Dendritic cell treated with granulocyte-macrophage colony-stimulating factor and Interleukin-4, amounts not matched to agents 40 ng/mL and 50 ng/mL, for 4 days (primary cell): ENCODE measurements at regions of chr18 and their contacts with region 1.

Region 1: DNA sequence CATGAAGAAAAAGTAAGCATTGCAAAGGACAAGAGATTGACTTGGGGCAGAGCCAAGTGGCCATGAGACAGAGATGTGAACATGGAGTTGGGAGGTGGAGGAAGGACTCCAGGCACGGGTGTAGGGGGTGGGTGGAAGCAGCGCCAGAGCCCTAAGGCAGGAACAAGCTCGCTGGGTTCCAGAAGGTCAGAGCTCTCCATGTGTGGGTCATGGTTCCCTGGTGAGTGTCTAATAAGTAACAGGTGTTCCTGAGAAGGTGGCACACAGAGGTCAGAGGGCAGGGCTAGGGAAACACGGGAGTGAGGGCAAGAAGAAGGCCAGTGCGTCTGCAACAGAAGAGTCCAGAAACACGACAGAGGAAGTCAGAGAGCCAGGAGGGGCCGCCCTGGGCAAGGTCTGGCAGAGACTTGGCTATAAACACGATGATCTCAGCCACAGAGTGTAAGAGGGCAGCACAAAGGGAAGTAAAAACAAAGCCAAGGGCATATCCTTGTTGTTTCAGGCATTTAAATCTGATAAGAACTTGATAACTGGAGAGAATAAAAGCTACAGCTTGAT is 260.8 kb downstream of the TGIF1 start:
- H3K4me3 Mint-ChIP-seq: peak overlapping the region; percentile 22
- H3K27ac Mint-ChIP-seq: peak overlapping the region; percentile 81
- H3K4me1 Mint-ChIP-seq: peaks cover 60% of the 10 kb centered on the region
- H3K27me3 Mint-ChIP-seq: no peaks in the 10 kb centered on the region

Region 2: GRCh38 chr18:3726238-3726951 is 15.6 kb after region 1 on chr18:
- intact Hi-C with region 1: loop called (anchors 2 kb)
- H3K4me3 Mint-ChIP-seq: no peak overlapping the region
- H3K27ac Mint-ChIP-seq: peak overlapping the region; percentile 79
- H3K4me1 Mint-ChIP-seq: peaks cover 58% of the 10 kb centered on the region
- H3K27me3 Mint-ChIP-seq: peaks cover 1% of the 10 kb centered on the region

Region 3: DNA sequence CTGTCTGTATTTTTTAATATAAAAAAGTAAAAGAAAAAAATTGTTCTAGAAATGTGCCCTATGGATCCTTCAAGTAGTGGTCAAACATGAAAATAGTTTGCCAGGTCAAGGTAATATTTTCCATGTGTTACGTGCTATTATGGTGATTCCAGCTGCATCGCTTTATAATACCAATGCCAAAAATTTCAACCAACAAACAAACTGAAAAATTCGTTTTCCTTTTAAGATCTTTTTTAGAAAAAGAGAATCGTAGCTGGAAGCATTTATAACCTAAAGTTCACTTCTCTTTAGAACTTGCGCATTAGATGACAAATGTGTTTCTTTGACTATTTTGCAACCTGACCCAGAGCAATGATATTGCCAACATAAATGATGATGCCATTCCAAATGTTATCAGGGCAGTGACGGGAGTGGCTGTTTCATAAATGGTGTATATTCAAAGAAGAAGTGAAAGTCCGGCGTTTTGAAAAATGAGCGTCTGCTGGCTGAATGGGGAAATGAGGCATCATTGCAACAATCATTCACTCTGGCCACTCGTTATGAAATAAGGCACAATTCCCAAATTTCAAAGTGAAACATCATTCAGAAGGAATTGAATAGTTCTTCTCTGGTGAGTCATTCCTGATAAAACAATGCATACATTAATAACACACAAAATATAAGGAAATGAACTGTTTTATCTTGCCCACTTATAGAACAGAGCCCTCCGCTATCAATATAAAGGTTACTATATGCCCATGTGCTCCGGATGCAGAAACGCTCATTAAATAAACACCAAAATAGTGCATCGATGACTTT is 36.6 kb after region 1 on chr18:
- intact Hi-C with region 1: loop called (anchors 5 kb)
- H3K4me3 Mint-ChIP-seq: no peak overlapping the region
- H3K27ac Mint-ChIP-seq: peak overlapping the region; percentile 76
- H3K4me1 Mint-ChIP-seq: peaks cover 48% of the 10 kb centered on the region
- H3K27me3 Mint-ChIP-seq: no peaks in the 10 kb centered on the region

Region 4: DNA sequence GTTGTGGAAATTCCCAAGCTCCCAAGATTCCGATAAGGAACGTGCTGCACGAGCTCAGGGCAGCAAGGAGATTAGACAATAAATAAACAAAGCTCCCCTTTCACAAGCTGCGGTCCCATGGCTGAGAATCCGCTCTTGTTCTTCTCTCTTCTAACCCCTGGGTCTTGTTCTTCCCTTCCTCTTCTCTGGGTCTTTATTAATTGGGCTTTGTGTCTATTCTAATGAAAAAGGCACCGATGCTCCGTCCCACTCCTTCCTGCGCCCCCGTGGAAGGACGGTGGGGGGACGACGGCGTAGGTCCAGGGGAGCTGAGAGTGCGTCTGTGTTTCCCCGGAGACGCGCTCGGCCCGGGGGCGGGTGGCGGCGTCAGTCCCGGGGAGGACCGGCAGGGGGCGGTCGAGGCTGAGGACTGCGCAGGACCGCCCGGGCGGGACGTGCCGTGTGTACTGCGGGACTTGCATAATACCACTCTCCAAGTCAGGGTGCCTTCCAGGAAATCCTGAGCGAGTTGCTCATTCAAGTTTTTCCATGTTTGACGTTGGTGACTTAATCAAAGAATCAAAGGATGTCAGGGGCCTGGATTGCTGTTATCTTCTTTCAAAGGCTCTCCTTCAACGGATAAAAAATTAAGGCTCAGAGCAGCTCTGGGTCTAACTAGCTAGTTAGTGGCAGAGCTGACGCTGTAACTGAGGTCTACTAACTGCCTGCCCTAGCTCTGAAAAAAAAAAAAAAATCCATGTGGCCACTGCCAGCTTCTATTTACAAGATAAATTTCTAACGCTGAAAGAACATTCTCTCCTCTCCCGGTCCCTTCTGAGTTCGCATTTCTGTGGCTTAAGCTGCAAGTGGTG is 60.6 kb after region 1 on chr18:
- intact Hi-C with region 1: no loop called
- H3K4me3 Mint-ChIP-seq: peak overlapping the region; percentile 80
- H3K27ac Mint-ChIP-seq: peak overlapping the region; percentile 40
- H3K4me1 Mint-ChIP-seq: peaks cover 14% of the 10 kb centered on the region
- H3K27me3 Mint-ChIP-seq: peaks cover 5% of the 10 kb centered on the region